Activated CD8-positive, alpha-beta T cell treated with anti-CD3 and anti-CD28 coated beads, Interleukin-2, amount 10 ng/mL, durations not matched to agents 7 days and 5 days (primary cell): ENCODE measurements at regions of chr1 and their contacts with region 1.

Region 1: GRCh38 chr1:201999625-202000238 is 10.7 kb upstream of the ELF3 start:
- DNase-seq: peak; percentile 45
- ATAC-seq: peak; percentile 82
- H3K4me3 Mint-ChIP-seq: no peak overlapping the region
- H3K27ac Mint-ChIP-seq: no peak overlapping the region
- H3K4me1 Mint-ChIP-seq: no peaks in the 10 kb centered on the region
- H3K27me3 Mint-ChIP-seq: no peaks in the 10 kb centered on the region

Region 2: GRCh38 chr1:201982623-201983379 is 16.9 kb before region 1 on chr1 and contains the start of gene RNPEP:
- CTCF ChIA-PET with region 1: interaction called, 18 read pairs
- POLR2A ChIA-PET with region 1: no interaction called
- DNase-seq: peak; percentile 65
- ATAC-seq: peak; percentile 85
- H3K4me3 Mint-ChIP-seq: peak within 1 kb of the TSS; percentile 89
- H3K27ac Mint-ChIP-seq: peak within 1 kb of the TSS; percentile 84
- H3K4me1 Mint-ChIP-seq: peaks cover 19% of the 10 kb centered on the region
- H3K27me3 Mint-ChIP-seq: peaks cover 8% of the 10 kb centered on the region
- total RNA-seq, gene RNPEP: 32.0 to 32.2 TPM

Region 3: DNA sequence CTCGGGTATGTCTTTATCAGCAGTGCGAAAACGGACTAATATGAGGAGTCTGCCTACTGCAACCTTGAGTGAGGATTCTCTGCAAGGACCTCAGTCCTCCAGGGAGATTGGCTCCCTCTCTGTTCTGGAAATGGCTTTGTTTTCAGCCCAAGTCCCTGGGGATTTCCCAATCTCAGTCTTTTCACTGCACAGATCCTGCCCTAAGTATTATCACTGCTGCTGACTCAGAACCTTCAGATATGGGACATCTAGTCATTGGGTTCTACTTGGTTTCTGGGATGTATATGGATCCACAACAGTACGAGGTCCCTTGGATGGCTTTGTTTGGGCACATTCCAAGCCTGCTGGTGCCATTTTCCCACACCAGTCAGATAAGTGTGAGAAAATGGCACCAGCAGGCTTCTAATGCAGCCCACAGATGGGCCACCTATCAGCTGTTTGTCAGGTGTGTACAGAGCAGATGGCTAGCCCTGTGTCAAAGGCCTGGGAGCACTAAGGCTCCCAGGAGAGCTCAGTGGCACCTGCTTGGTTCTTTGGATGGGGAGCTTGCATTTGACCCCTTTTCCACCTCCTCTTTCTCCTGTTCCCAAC is 38.1 kb after region 1 on chr1:
- CTCF ChIA-PET with region 1: no interaction called
- POLR2A ChIA-PET with region 1: no interaction called
- DNase-seq: no peak
- ATAC-seq: no peak
- H3K4me3 Mint-ChIP-seq: no peak overlapping the region
- H3K27ac Mint-ChIP-seq: no peak overlapping the region
- H3K4me1 Mint-ChIP-seq: no peaks in the 10 kb centered on the region
- H3K27me3 Mint-ChIP-seq: no peaks in the 10 kb centered on the region

Region 4: GRCh38 chr1:202076050-202076511 is 76.3 kb after region 1 on chr1:
- CTCF ChIA-PET with region 1: no interaction called
- POLR2A ChIA-PET with region 1: no interaction called
- DNase-seq: no peak
- ATAC-seq: no peak
- H3K4me3 Mint-ChIP-seq: no peak overlapping the region
- H3K27ac Mint-ChIP-seq: no peak overlapping the region
- H3K4me1 Mint-ChIP-seq: no peaks in the 10 kb centered on the region
- H3K27me3 Mint-ChIP-seq: no peaks in the 10 kb centered on the region

Region 5: GRCh38 chr1:202117865-202118371 is 118.2 kb after region 1 on chr1:
- CTCF ChIA-PET with region 1: interaction called, 12 read pairs
- POLR2A ChIA-PET with region 1: no interaction called
- DNase-seq: no peak
- ATAC-seq: no peak
- H3K4me3 Mint-ChIP-seq: no peak overlapping the region
- H3K27ac Mint-ChIP-seq: no peak overlapping the region
- H3K4me1 Mint-ChIP-seq: no peaks in the 10 kb centered on the region
- H3K27me3 Mint-ChIP-seq: peaks cover 2% of the 10 kb centered on the region

Region 6: GRCh38 chr1:202135221-202135721 is 135.5 kb after region 1 on chr1:
- CTCF ChIA-PET with region 1: interaction called, 41 read pairs
- POLR2A ChIA-PET with region 1: no interaction called
- DNase-seq: peak; percentile 67
- ATAC-seq: peak; percentile 77
- H3K4me3 Mint-ChIP-seq: no peak overlapping the region
- H3K27ac Mint-ChIP-seq: no peak overlapping the region
- H3K4me1 Mint-ChIP-seq: peaks cover 12% of the 10 kb centered on the region
- H3K27me3 Mint-ChIP-seq: no peaks in the 10 kb centered on the region